ENCODE measurements at regions of chr4 and their contacts with region 1.

Region 1: GRCh38 chr4:8267077-8267476 is 2.5 kb upstream of the HTRA3 start:
- DNase-seq: peak; percentile 78 to 90 (median 85)
- ATAC-seq: peak; percentile 60 to 78 (median 64)
- H3K4me3 ChIP-seq: no peak overlapping the region
- H3K27ac ChIP-seq: peak overlapping the region in 8 of 12 donors; percentile 11 to 57 (median 38)
- H3K4me1 ChIP-seq: peaks cover 3 to 52% (median 34%) of the 10 kb centered on the region in 12 donors
- H3K27me3 ChIP-seq: no peaks in the 10 kb centered on the region
- CTCF ChIP-seq: peak; percentile 58 to 88 (median 78)
- POLR2A ChIP-seq: no peak

Region 2: DNA sequence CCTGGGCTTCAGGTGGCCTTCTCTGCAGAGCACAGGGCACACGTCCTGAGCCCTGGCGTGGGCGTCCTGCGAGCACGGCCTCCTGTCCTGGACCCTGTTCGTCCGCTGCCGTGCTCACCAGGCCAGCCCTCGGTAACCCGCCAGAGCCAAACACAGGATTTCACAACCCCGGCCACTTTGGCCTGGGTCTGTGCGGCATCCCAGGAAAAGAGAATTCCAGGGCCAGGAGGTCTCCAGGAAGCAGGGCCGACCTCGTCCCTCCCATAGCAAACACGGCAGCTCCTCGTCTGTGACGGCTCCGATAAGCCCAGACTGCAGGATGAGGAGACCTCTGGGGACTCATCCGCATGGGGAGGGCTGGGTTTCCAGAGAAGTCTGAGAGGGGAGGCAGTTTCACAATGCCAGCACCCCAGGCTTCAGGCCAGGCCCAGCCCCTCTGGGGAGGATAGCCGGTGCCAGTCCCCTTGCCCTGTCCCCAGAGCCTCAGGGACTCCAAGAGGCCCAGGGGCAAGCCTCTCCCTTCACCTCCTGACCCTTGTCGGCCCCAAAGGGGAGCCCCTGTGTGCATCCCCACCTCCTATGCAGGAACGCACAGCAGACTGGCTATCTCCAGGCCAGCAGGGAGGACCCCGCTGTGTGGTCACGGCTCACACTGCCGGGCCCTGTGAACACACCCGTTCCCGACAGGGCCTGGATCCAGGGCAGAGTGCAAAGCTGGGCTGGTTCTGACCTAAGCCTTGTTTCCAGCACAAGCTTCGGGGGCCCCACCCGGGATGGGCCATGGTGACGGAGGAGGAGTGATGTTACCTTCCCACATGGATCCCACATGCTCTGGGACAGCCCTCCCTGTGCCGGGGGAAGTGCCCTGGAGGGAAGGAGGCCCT is 19.8 kb before region 1 on chr4:
- intact Hi-C with region 1: loop called in 1 of 10 experiments (anchors 2 kb)
- DNase-seq: peak in 4 of 5 donors; percentile 56 to 83 (median 78)
- ATAC-seq: peak; percentile 56 to 85 (median 82)
- H3K4me3 ChIP-seq: no peak overlapping the region
- H3K27ac ChIP-seq: peak overlapping the region; percentile 12 to 89 (median 67)
- H3K4me1 ChIP-seq: peaks cover 0 to 30% (median 22%) of the 10 kb centered on the region in 12 donors
- H3K27me3 ChIP-seq: no peaks in the 10 kb centered on the region
- CTCF ChIP-seq: no peak
- POLR2A ChIP-seq: no peak

Measured in heart left ventricle (tissue), 16 donors.